Mammary epithelial cell (primary cell): ENCODE measurements at regions of chr3 and their contacts with region 1.

Region 1: DNA sequence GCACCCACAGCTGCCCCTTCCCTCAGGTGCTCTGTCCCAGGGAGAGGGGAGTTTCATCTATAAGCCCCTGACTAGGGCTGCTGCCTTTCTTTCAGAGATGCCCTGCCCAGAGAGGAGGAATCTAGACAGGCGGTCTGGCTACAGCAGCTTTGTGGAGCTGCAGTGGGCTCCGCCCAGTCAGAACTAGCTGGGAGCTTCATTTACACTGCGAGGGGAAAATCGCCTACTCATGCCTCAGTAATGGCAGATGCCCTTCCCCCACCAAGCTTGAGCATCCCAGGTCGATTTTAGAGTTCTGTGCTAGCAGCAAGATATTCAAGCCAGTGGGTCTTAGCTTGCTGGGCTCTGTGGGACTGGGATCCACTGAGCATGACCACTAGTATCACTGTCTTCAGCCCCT is 181.2 kb upstream of the RARB start:
- DNase-seq: no peak
- H3K4me3 ChIP-seq: no peak overlapping the region
- H3K27ac ChIP-seq: no peak overlapping the region
- H3K4me1 ChIP-seq: no peaks in the 10 kb centered on the region
- H3K27me3 ChIP-seq: no peaks in the 10 kb centered on the region
- CTCF ChIP-seq: no peak

Region 2: GRCh38 chr3:25344670-25345069 is 97.8 kb after region 1 on chr3:
- CTCF ChIA-PET with region 1: no interaction called
- dilution Hi-C with region 1: loop called (anchors 5 kb)
- in situ Hi-C with region 1: no loop called
- intact Hi-C with region 1: no loop called
- DNase-seq: no peak
- H3K4me3 ChIP-seq: no peak overlapping the region
- H3K27ac ChIP-seq: no peak overlapping the region
- H3K4me1 ChIP-seq: no peaks in the 10 kb centered on the region
- H3K27me3 ChIP-seq: no peaks in the 10 kb centered on the region
- CTCF ChIP-seq: no peak